Sigmoid colon (tissue), 7 donors: ENCODE measurements at regions of chr16 and their contacts with region 1.

Region 1: GRCh38 chr16:3857189-3858043 is 23.1 kb downstream of the CREBBP start:
- DNase-seq: peak; percentile 80
- H3K4me3 ChIP-seq: no peak overlapping the region
- H3K27ac ChIP-seq: peak overlapping the region; percentile 1 to 66 (median 46)
- H3K4me1 ChIP-seq: peaks cover 0 to 92% (median 76%) of the 10 kb centered on the region in 4 donors
- H3K27me3 ChIP-seq: no peaks in the 10 kb centered on the region
- CTCF ChIP-seq: no peak
- EP300 ChIP-seq: no peak
- POLR2A ChIP-seq: no peak

Region 2: GRCh38 chr16:3804426-3805016 is 52.9 kb before region 1 on chr16:
- intact Hi-C with region 1: loop called (anchors 5 kb)
- DNase-seq: no peak
- H3K4me3 ChIP-seq: no peak overlapping the region
- H3K27ac ChIP-seq: no peak overlapping the region
- H3K4me1 ChIP-seq: peaks cover 0 to 59% (median 48%) of the 10 kb centered on the region in 4 donors
- H3K27me3 ChIP-seq: no peaks in the 10 kb centered on the region
- CTCF ChIP-seq: no peak
- EP300 ChIP-seq: no peak
- POLR2A ChIP-seq: no peak